ENCODE measurements at regions of chr1 and their contacts with region 1.

Region 1: DNA sequence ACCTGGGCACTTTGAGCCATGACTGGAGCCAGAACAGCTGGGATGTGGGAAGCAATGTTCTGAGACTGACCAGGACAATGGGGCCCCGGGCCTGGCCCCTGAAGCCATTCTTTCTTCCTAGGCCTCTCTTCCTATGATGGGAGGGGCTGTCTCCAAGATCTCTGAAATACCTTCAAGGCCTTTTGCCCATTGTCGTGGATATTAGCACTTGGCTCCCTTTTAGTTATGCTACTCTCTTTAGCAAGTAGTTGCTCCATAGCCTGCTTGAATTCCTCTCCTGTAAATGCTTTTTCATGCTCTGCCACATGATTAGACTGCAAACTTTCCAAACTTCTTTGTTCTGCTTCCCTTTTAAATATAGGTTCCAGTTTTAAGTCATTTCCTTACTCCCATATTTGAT is 262.9 kb upstream of the CACYBP start:
- DNase-seq: no peak
- ATAC-seq: no peak
- H3K4me3 ChIP-seq: no peak overlapping the region
- H3K27ac ChIP-seq: no peak overlapping the region
- H3K4me1 ChIP-seq: no peaks in the 10 kb centered on the region
- H3K27me3 ChIP-seq: no peaks in the 10 kb centered on the region
- CTCF ChIP-seq: no peak

Region 2: DNA sequence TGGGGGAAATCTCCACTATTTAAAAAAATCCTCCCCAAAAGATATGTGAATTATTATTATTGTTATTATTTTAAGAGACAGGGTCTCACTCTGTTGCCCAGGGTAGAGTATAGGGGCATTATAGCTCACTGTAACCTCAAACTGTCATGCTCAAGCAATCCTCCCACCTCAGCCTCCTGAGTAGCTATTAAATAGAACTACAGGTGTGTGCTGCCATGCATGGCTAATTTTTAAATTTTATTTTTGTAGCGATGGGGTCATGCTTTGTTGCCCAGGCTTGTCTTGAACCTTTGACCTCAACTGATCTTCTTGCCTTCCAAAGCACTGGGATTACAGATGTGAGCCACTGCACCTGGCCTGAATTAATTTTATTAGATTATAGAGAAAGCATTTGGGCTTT is 460.7 kb before region 1 on chr1:
- intact Hi-C with region 1: loop called in 1 of 3 experiments (anchors 10 kb)
- DNase-seq: no peak
- ATAC-seq: no peak
- H3K4me3 ChIP-seq: no peak overlapping the region
- H3K27ac ChIP-seq: no peak overlapping the region
- H3K4me1 ChIP-seq: no peaks in the 10 kb centered on the region
- H3K27me3 ChIP-seq: no peaks in the 10 kb centered on the region
- CTCF ChIP-seq: no peak

Region 3: DNA sequence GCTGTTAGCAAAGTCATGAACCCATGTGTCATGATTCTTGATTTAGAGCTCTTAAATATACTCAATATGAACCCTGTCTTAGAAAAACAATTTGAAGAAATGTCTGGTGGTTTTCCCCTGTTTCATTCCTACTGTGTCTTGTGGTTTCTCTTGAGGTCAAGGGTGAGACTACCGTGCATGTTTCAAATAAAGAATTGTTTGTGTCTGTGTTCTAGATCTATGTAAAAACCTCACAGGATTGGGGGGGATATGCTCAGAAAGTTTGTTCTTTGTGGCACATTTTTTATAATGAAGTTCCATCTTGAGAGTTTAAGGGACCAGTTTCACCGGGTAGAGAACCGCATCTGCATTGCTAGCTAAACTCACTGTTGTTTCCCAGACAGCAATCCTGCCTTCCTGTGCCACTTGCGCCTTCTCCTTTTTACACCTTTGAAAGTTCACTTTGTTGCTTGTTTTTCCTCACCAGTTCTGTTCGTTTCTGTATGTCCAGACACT is 232.0 kb after region 1 on chr1:
- intact Hi-C with region 1: no loop called
- DNase-seq: no peak
- ATAC-seq: peak in 2 of 4 donors; percentile 9 to 10
- H3K4me3 ChIP-seq: no peak overlapping the region
- H3K27ac ChIP-seq: no peak overlapping the region
- H3K4me1 ChIP-seq: peaks cover 5 to 21% (median 11%) of the 10 kb centered on the region in 3 donors
- H3K27me3 ChIP-seq: no peaks in the 10 kb centered on the region
- CTCF ChIP-seq: no peak

Region 4: DNA sequence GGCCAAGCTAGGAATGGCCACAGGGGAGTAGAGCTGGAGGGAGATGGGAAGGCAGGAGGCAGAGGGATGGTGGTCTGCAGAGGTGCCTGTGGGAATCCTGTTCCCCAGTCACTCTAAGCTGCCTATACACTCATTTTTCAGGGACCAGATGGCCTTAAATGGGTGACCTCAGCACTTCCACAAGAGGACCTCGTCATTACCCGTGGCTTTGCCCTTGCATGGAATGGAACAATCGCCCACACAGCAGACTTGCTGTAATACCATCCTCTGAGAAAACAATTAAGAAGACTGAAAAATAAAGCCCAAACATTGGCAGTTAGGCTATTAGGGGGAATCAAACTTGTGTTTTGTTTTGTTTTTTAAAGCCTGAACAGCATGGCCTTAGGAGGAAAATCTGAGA is 317.9 kb after region 1 on chr1:
- intact Hi-C with region 1: no loop called
- DNase-seq: no peak
- ATAC-seq: no peak
- H3K4me3 ChIP-seq: no peak overlapping the region
- H3K27ac ChIP-seq: no peak overlapping the region
- H3K4me1 ChIP-seq: no peaks in the 10 kb centered on the region
- H3K27me3 ChIP-seq: no peaks in the 10 kb centered on the region
- CTCF ChIP-seq: no peak

Measured in pancreas (tissue), 10 donors.